ENCODE measurements at regions of chr12 and their contacts with region 1.

Region 1: DNA sequence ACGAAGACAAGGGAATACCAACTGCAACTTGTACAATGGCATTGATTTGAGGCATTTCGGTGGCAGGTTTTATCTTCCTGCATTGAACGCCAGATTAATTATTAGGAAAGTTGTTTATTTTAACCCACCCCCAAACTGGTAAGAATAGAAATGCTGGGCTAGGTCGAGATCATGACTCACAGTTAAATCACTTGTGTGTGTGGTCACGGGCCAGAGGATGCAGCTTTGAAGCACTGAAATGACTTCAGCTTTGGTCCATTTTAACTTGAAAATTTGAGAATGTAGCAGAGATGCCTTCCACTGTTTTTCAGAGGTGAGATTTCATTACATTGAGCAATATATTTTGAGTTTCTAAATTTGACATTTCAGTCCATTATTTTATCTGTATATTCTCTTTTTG is 23.6 kb upstream of the KCNH3 start:
- DNase-seq: no peak
- ATAC-seq: no peak
- H3K4me3 Mint-ChIP-seq: no peak overlapping the region
- H3K27ac Mint-ChIP-seq: no peak overlapping the region
- H3K4me1 Mint-ChIP-seq: no peaks in the 10 kb centered on the region
- H3K27me3 Mint-ChIP-seq: no peaks in the 10 kb centered on the region

Region 2: DNA sequence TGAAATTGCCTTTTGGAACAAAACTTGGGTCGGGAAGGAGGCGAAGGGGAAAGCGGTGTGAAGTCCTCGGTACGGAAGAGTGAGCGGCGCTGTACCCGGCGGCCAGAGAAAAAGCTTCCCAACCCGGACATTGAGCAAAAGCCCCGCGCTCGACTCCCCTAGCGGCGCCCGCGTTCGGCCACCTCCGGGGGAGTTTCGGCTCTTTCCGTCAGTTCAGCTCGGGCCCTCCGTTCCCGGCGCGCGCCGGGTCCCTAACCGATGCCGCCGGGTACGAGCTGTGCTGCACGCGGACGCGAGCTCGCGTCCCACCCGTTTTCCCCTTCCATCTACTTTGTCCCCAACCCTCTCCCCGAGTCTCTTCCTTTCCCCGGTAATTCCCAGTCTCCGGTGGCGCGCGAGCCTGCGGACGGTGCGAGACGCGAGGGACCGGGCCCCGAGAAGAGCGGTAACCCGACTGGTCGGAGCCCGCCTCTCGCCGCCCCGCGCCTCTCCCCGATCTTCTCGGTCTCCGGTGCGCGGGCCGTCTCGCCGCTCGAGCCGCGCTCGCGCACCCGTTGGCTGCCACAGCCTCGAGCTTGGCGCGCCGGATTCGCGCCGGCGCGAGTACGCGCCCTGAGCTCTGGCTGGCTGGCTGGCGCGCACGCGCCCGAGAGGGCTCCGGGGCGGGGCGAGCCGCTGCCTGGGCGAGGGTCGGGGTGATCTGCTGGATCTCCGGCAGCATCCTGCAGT is 148.4 kb before region 1 on chr12:
- CTCF ChIA-PET with region 1: interaction called, 393 read pairs
- POLR2A ChIA-PET with region 1: interaction called, 8 read pairs
- DNase-seq: peak; percentile 90
- ATAC-seq: peak; percentile 89
- H3K4me3 Mint-ChIP-seq: peak overlapping the region; percentile 97
- H3K27ac Mint-ChIP-seq: peak overlapping the region; percentile 98
- H3K4me1 Mint-ChIP-seq: peaks cover 38% of the 10 kb centered on the region
- H3K27me3 Mint-ChIP-seq: no peaks in the 10 kb centered on the region

Region 3: DNA sequence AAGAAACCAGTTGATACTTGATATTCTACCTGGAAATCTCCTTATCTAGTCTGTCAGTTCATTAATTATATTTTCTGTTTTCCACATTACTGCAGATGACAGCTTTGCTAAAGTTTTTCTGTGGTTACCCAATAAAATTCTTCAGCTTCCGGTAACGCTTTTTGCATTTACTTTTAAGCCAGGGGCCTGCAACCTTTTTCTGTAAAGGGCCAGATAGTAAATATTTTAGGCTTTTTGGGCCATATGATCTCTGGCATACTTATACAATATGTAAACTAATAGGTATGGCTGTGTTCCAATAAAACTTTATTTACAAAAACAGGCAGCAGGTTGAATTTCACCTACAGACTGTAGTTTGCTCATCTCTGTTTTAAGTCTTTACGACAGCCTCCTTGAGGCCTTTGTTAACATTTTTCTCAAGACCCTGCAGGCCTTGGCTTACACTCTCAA is 99.7 kb before region 1 on chr12:
- CTCF ChIA-PET with region 1: no interaction called
- POLR2A ChIA-PET with region 1: no interaction called
- DNase-seq: no peak
- ATAC-seq: no peak
- H3K4me3 Mint-ChIP-seq: no peak overlapping the region
- H3K27ac Mint-ChIP-seq: no peak overlapping the region
- H3K4me1 Mint-ChIP-seq: peaks cover 2% of the 10 kb centered on the region
- H3K27me3 Mint-ChIP-seq: no peaks in the 10 kb centered on the region

Region 4: GRCh38 chr12:49482095-49483051 is 32.9 kb before region 1 on chr12:
- CTCF ChIA-PET with region 1: interaction called, 13 read pairs
- POLR2A ChIA-PET with region 1: no interaction called
- DNase-seq: no peak
- ATAC-seq: no peak
- H3K4me3 Mint-ChIP-seq: no peak overlapping the region
- H3K27ac Mint-ChIP-seq: no peak overlapping the region
- H3K4me1 Mint-ChIP-seq: peaks cover 12% of the 10 kb centered on the region
- H3K27me3 Mint-ChIP-seq: no peaks in the 10 kb centered on the region

Region 5: DNA sequence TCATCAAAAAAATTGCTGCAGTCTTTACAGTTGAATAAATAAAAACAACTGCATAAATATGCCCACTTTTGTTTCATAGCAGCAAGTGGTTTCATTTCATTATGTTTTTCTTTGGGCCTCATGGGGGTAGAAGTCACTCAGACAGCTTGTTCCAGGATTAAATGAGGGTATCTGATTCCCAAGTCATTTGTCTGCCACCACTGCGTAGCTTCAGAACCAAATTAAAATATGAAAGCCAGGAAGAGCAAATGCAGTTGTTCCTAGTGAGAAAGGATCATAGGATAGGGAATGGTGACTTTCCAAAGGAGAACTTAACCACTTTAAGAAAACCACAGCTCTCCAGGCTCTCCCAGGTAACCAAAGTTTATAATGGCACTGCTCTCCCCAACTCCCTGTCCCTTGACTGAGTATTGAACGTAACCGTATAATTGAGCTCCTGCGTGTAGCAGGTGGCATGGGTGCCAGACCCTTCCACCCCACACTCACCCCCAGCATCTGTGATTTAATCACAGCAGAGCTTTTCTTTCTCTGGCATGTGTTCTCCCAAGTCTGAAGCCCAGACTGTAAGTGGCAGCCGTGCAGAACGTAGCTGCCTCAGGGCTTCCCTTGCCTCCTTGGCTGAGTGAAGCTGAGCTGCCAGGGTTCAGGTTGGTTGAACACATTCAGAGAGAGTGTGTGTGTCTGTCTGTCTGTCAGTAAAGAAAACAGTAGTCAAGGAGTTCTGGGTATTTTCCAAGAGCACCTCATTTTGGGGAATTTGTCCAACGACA is 12.3 kb after region 1 on chr12:
- CTCF ChIA-PET with region 1: interaction called, 19 read pairs
- POLR2A ChIA-PET with region 1: no interaction called
- DNase-seq: no peak
- ATAC-seq: no peak
- H3K4me3 Mint-ChIP-seq: no peak overlapping the region
- H3K27ac Mint-ChIP-seq: no peak overlapping the region
- H3K4me1 Mint-ChIP-seq: peaks cover 3% of the 10 kb centered on the region
- H3K27me3 Mint-ChIP-seq: peaks cover under 1% of the 10 kb centered on the region